Endothelial cell of umbilical vein (primary cell): ENCODE measurements at regions of chr16 and their contacts with region 1.

Region 1: DNA sequence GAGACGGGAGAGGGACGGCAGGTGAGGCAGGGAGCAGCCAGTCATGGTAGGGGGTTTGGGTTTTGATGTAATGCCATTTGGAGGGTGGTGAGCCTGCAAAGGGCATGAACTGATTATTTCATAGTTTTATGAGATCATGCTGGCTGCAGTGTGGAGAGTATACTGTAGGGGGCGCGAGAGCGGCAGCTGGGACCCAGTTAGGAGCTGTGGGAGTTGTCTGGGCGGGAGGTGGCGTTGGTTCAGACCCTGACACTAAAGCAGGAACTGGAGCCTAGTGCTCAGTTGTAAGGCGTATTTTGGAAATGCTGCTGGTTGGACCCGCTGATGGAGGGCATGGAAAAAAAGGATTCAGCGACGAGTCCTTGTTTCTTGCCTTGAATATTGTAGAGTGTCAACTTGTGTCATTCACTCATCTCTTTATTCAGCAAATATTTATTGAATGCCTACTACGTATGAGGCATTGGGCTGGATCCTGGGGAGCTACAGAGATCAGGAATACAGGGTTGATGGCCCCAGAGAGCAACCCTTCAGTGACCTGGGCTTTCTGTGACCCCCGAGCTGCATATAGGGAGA is 23.7 kb upstream of the KDM8 start:
- DNase-seq: peak; percentile 77
- H3K4me3 ChIP-seq: no peak overlapping the region
- H3K27ac ChIP-seq: no peak overlapping the region
- H3K4me1 ChIP-seq: peaks cover 18% of the 10 kb centered on the region
- H3K27me3 ChIP-seq: peaks cover 10% of the 10 kb centered on the region in 2 experiments
- CTCF ChIP-seq: peak; percentile 94 to 97
- POLR2A ChIP-seq: no peak

Region 2: DNA sequence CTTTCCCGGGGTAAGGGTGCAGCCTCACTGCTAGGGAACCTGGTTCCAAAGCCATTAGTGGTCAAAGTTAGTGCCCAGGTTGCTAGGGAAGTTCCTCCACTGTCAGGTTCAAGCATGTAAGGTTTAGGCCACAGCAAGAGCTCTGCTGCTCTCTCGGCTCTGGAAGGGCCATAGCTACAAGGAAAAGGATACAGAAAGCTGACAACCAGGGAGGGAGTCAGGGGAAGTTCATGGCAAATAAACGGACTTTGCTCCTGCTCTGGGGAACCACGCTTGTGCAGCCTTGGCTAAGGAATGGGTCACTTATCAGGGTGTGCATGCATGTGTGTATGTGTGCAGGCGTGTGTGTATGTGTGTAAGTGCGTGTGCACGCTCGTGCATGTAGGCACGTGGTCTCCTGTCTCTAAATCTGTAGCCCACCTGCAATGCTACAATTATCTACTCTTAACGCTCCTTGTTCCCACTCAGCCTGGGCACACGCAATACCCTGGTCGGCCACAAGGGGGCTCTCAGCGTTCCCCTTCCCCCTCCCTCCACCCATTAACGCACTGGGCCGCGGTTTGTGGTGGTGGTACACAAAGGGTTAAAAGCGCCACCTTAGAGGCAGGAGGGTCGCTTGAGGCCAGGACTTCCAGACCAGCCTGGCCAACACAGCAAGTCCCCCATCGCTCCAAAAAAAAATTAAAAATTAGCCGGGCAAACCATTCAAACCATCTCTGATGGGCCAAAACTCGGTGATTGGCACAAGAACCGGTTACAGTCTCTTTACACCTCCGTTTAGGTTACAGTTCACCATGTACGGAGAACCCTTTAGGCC is 24.7 kb before region 1 on chr16:
- CTCF ChIA-PET with region 1: interaction called, 3 read pairs
- POLR2A ChIA-PET with region 1: no interaction called
- dilution Hi-C with region 1: no loop called
- intact Hi-C with region 1: loop called (anchors 2 kb)
- DNase-seq: peak; percentile 38
- H3K4me3 ChIP-seq: no peak overlapping the region
- H3K27ac ChIP-seq: no peak overlapping the region
- H3K4me1 ChIP-seq: no peaks in the 10 kb centered on the region
- H3K27me3 ChIP-seq: no peaks in the 10 kb centered on the region
- CTCF ChIP-seq: peak; percentile 94 to 96
- POLR2A ChIP-seq: no peak

Region 3: GRCh38 chr16:27203429-27204231 is 24.0 kb after region 1 on chr16 and contains the start of gene KDM8:
- CTCF ChIA-PET with region 1: interaction called, 48 read pairs
- POLR2A ChIA-PET with region 1: interaction called, 6 read pairs
- dilution Hi-C with region 1: no loop called
- intact Hi-C with region 1: loop called (anchors 1 kb)
- DNase-seq: peak; percentile 100
- H3K4me3 ChIP-seq: peak within 1 kb of the TSS; percentile 19 to 78 (median 59)
- H3K27ac ChIP-seq: peak within 1 kb of the TSS; percentile 78
- H3K4me1 ChIP-seq: peaks cover 10% of the 10 kb centered on the region
- H3K27me3 ChIP-seq: peaks cover 2 to 6% of the 10 kb centered on the region in 2 experiments
- CTCF ChIP-seq: no peak
- POLR2A ChIP-seq: peak; percentile 90
- total RNA-seq, gene KDM8: 8.4 and 8.9 TPM in 2 replicates

Region 4: GRCh38 chr16:27374804-27375425 is 195.3 kb after region 1 on chr16:
- CTCF ChIA-PET with region 1: interaction called, 136 read pairs
- POLR2A ChIA-PET with region 1: no interaction called
- dilution Hi-C with region 1: no loop called
- intact Hi-C with region 1: no loop called
- DNase-seq: peak; percentile 83
- H3K4me3 ChIP-seq: no peak overlapping the region
- H3K27ac ChIP-seq: no peak overlapping the region
- H3K4me1 ChIP-seq: no peaks in the 10 kb centered on the region
- H3K27me3 ChIP-seq: no peaks in the 10 kb centered on the region
- CTCF ChIP-seq: peak; percentile 67 to 69
- POLR2A ChIP-seq: no peak

Region 5: DNA sequence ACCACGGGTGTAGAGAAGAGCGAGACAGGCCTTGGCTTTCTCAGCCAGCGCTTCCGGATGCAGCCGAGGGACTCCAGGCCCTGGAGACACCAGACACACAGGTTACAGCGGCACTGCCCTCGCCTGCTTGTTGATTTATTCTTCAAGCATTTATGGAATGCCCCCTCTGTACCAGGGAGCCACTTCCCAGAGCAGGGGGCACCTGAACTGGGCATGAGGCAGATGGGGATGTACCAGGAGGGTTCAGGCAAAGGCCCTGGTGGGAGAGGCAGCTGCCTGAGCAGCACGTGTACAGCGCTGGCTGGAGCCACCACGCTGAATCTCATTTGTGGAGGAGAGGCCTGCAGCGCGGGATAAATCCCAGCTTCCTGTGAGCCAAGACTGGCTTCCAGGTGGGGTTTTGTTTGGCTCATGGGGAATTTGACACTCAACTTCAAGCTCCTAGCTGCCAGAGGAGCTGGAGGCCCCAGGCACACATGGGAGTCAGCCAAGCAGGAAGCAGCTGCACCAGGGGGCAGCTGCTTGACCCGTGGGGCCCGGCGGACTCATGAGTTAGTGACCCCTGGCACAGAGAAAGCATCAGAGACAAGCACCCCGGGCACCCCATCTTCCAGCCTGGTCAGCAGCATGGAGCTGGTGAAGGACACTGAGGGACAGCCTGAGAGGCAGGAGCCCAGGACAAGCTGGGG is 282.0 kb after region 1 on chr16:
- CTCF ChIA-PET with region 1: interaction called, 6 read pairs
- POLR2A ChIA-PET with region 1: no interaction called
- dilution Hi-C with region 1: no loop called
- intact Hi-C with region 1: loop called (anchors 1 kb)
- DNase-seq: peak; percentile 69
- H3K4me3 ChIP-seq: no peak overlapping the region
- H3K27ac ChIP-seq: peak overlapping the region; percentile 61
- H3K4me1 ChIP-seq: peaks cover 16% of the 10 kb centered on the region
- H3K27me3 ChIP-seq: no peaks in the 10 kb centered on the region
- CTCF ChIP-seq: no peak
- POLR2A ChIP-seq: no peak